ENCODE measurements at regions of chr17 and their contacts with region 1.

Region 1: DNA sequence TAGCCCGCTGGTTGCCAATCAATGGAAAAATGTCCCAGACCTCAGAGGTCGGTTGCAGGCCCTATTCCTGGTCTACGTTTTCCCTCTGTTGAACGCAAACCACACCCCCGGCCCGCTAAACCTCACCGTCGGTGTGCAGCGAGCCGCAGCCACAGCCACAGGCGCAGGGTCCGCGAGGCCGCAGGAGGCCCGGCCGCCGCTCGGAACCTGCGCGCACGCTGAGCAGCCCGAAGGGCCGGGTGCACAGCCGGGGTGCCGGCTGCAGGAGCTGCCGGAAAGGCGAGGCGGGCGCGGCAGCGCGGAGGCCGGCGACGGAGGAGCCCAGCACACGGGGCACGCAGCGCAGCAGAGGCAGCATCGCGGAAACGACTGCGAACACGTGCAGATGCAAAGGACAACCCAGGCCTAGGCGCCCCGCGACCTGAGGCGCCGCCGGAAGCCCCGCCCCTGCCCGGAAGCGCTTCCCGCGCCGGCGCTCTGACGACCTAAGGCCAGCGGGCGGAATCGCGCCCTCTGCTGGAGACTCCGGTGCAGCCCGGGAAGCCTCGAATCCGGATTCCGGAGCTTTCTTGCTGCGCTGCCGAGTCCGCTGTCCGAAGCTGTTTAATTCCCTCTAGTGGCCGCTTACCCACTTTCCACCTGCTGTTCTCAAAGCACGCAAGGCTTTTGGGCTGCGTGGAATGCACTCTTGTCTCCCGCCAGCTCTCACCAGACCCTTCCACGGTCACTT is at the start of gene C1QBP:
- DNase-seq: peak; percentile 94
- ATAC-seq: peak; percentile 92
- H3K4me3 Mint-ChIP-seq: peak within 1 kb of the TSS; percentile 77
- H3K27ac Mint-ChIP-seq: peak within 1 kb of the TSS; percentile 91
- H3K4me1 Mint-ChIP-seq: peaks cover 40% of the 10 kb centered on the region
- H3K27me3 Mint-ChIP-seq: no peaks in the 10 kb centered on the region
- total RNA-seq, gene C1QBP: 178 to 181 TPM

Region 2: DNA sequence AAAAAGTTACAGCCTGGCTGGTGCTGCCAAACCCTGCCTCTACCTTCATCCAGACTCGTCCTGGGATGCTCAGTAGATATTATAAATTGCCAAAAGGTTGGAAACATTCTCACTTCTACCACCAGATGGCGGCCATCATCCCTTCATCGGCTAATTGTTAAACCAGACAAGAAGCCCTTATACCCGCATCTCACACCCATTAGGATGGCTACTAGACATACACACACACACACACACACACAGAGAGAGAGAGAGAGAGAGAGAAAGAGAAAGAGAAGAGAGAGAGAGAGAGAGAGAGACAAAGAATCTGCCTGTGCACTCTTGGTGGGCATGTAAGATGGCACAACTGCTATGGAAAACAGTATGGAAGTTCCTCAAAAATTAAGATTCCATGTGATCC is 189.3 kb before region 1 on chr17:
- CTCF ChIA-PET with region 1: interaction called, 24 read pairs
- POLR2A ChIA-PET with region 1: no interaction called
- DNase-seq: peak; percentile 79
- ATAC-seq: peak; percentile 86
- H3K4me3 Mint-ChIP-seq: no peak overlapping the region
- H3K27ac Mint-ChIP-seq: peak overlapping the region; percentile 21
- H3K4me1 Mint-ChIP-seq: peaks cover 10% of the 10 kb centered on the region
- H3K27me3 Mint-ChIP-seq: no peaks in the 10 kb centered on the region

Region 3: DNA sequence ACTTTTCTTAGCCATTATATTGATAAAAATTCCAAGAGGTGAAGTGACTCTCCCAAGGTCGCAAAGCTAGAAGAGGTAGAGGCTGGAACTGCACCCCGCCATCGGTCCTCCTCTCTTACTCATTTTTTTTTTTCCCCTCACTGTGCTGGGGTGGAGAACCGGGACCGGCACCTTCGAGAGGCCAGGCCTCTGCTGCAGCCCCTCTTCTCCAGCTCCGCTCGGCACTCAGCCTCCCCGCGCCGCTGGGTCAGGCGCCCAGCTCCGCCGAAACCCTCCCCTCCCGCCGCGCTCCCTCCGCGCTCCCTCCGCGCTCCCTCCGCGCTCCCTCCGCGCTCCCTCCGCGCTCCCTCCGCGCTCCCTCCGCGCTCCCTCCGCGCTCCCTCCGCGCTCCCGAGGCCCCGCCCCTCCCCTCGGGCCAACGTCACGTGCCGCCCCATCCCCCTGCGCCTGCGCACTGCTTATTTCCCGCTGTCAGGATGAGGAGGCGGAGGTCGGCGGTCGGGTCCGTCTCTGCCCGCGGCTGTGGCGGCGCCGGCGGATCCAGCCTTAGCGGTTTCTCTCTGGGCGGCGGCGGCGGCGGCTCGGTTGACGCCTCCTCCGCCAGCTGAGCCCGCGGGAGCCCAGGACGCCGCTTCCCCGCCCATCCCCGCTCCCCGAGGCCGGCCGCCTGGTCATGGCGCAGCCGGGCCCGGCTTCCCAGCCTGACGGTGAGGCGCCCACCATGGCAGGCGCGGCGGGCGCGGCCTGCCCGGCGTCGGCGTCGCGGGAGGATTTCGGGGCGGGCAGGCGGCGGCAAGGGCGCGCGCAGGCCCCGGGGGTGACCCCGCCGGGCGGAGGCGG is 156.8 kb before region 1 on chr17 and contains the start of gene RABEP1:
- CTCF ChIA-PET with region 1: interaction called, 10 read pairs
- POLR2A ChIA-PET with region 1: no interaction called
- DNase-seq: peak; percentile 94
- ATAC-seq: peak; percentile 84
- H3K4me3 Mint-ChIP-seq: peak within 1 kb of the TSS; percentile 87
- H3K27ac Mint-ChIP-seq: peak within 1 kb of the TSS; percentile 87
- H3K4me1 Mint-ChIP-seq: peaks cover 24% of the 10 kb centered on the region
- H3K27me3 Mint-ChIP-seq: no peaks in the 10 kb centered on the region
- total RNA-seq, gene RABEP1: 37.5 to 37.8 TPM

Region 4: DNA sequence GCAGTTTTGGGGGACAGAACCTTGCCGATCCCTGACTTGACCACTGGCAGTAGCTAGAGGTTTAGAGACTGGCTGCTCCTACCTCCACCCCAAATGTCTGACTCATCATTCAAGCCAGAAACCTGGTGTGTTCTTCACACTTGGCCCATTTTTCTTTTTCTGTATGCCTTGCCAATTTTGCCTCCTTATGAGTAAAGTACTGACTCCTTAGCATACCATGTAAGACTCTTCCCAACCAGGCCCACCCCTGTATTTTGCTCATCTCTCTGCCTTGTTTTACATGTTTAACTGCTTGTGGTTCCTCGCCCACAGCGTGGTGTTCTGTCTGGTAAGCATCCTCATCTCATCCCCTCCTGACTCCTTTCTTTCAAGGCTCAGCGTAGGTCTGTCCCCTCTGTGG is 57.3 kb before region 1 on chr17:
- CTCF ChIA-PET with region 1: no interaction called
- POLR2A ChIA-PET with region 1: no interaction called
- DNase-seq: no peak
- ATAC-seq: no peak
- H3K4me3 Mint-ChIP-seq: no peak overlapping the region
- H3K27ac Mint-ChIP-seq: no peak overlapping the region
- H3K4me1 Mint-ChIP-seq: no peaks in the 10 kb centered on the region
- H3K27me3 Mint-ChIP-seq: no peaks in the 10 kb centered on the region

Region 5: DNA sequence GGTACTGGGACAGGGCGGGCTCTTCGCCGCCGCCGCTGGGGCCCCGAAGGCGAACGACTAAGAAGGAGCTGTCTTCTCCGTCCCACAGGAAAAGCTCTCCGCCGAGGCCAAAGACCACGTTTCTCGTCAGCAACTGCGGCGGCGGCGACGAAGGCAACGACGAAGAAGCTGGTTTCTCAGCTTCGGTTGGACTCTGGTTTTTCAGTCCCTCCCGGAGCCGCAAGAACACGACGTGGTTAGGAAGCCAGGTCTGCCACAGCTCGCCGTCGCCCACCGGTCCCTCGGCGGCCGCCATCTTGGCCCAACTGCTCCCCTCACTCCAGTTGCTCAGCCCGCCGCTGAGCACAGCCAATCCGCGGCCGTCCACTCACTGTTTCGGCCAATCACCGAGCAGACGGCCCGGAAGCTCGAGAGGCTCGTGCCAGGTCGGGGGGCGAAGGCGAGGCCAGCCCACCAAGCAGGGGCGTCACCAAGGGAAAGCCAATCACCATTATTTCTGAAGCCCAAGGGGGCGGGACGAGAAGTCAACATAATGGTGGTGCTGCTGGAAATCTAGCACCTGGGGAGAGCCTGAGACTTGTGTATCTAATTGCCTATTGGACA is 19.4 kb before region 1 on chr17 and contains the start of gene NUP88:
- CTCF ChIA-PET with region 1: interaction called, 25 read pairs
- POLR2A ChIA-PET with region 1: interaction called, 38 read pairs
- DNase-seq: peak; percentile 98
- ATAC-seq: peak; percentile 97
- H3K4me3 Mint-ChIP-seq: peak within 1 kb of the TSS; percentile 100
- H3K27ac Mint-ChIP-seq: peak within 1 kb of the TSS; percentile 99
- H3K4me1 Mint-ChIP-seq: peaks cover 47% of the 10 kb centered on the region
- H3K27me3 Mint-ChIP-seq: no peaks in the 10 kb centered on the region
- total RNA-seq, gene NUP88: 97.2 to 105 TPM

Region 6: GRCh38 chr17:5468075-5468473 is 29.2 kb after region 1 on chr17:
- CTCF ChIA-PET with region 1: interaction called, 19 read pairs
- POLR2A ChIA-PET with region 1: interaction called, 5 read pairs
- DNase-seq: peak; percentile 26
- ATAC-seq: peak; percentile 28
- H3K4me3 Mint-ChIP-seq: peak overlapping the region; percentile 80
- H3K27ac Mint-ChIP-seq: peak overlapping the region; percentile 79
- H3K4me1 Mint-ChIP-seq: peaks cover 39% of the 10 kb centered on the region
- H3K27me3 Mint-ChIP-seq: no peaks in the 10 kb centered on the region

Measured in activated CD8-positive, alpha-beta T cell treated with anti-CD3 and anti-CD28 coated beads, Interleukin-2, amount 10 ng/mL, durations not matched to agents 7 days and 5 days (primary cell).